Heart left ventricle (tissue), 16 donors: ENCODE measurements at regions of chr6 and their contacts with region 1.

Region 1: GRCh38 chr6:36839749-36840431 is 646 bp upstream of the CPNE5 start:
- DNase-seq: peak; percentile 59 to 80 (median 75)
- ATAC-seq: peak in 3 of 4 donors; percentile 6 to 43 (median 24)
- H3K4me3 ChIP-seq: peak overlapping the region; percentile 33 to 76 (median 60)
- H3K27ac ChIP-seq: peak overlapping the region; percentile 65 to 91 (median 75)
- H3K4me1 ChIP-seq: peaks cover 4 to 61% (median 17%) of the 10 kb centered on the region in 12 donors
- H3K27me3 ChIP-seq: peaks cover 0 to 24% (median 0%) of the 10 kb centered on the region in 9 donors
- CTCF ChIP-seq: peak in 10 of 12 donors; percentile 9 to 56 (median 42)
- POLR2A ChIP-seq: no peak

Region 2: DNA sequence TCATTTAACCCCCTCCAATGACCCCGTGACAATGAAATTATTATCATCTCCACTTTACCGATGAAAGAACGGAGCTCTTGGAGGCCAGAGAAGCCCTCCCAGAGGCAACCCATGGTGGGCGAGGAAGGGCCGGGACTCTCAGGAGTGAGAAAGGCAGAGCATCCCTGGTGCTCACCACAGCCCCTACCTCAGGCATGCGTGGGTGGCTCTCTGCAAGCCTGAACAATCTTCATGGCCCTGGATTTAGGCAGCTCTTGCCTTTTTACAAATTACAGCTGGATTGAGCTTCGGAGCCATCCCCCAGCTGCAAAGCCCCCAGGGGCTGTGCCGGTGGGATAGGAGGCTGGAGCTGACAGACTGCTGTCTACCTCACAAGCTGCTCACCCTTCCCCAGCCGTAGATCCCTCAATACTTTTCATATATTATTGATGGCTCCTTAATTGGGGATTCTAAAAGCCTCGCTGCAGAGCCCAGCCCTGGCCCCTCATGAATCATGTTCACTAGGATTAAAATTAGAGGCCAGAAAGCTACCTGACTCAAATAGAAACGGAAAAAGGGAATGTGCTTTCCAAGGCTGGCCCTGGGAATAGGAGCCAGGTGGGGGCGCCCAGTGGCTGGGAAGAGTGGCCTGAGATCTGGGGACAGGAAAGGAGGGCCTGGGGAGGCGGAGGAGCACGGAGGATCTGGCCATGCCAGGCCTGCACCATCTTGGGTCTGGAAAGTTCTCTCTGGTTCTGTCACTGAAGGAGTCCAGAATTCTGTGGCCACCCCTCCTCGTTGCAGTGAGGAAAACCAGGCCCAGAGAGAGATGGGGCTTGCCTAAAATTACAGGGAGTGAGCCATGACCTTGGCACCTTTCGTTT is 29.7 kb before region 1 on chr6:
- intact Hi-C with region 1: loop called in 1 of 10 experiments (anchors 5 kb)
- DNase-seq: peak in 2 of 5 donors; percentile 18 to 44
- ATAC-seq: peak in 2 of 4 donors; percentile 1 to 44
- H3K4me3 ChIP-seq: no peak overlapping the region
- H3K27ac ChIP-seq: peak overlapping the region in 2 of 12 donors; percentile 18 to 39
- H3K4me1 ChIP-seq: peaks cover 0 to 10% (median 0%) of the 10 kb centered on the region in 12 donors
- H3K27me3 ChIP-seq: no peaks in the 10 kb centered on the region
- CTCF ChIP-seq: peak in 3 of 12 donors; percentile 14 to 40 (median 21)
- POLR2A ChIP-seq: no peak